Dorsolateral prefrontal cortex (tissue), 120 donors: ENCODE measurements at regions of chr19 and their contacts with region 1.

Region 1: DNA sequence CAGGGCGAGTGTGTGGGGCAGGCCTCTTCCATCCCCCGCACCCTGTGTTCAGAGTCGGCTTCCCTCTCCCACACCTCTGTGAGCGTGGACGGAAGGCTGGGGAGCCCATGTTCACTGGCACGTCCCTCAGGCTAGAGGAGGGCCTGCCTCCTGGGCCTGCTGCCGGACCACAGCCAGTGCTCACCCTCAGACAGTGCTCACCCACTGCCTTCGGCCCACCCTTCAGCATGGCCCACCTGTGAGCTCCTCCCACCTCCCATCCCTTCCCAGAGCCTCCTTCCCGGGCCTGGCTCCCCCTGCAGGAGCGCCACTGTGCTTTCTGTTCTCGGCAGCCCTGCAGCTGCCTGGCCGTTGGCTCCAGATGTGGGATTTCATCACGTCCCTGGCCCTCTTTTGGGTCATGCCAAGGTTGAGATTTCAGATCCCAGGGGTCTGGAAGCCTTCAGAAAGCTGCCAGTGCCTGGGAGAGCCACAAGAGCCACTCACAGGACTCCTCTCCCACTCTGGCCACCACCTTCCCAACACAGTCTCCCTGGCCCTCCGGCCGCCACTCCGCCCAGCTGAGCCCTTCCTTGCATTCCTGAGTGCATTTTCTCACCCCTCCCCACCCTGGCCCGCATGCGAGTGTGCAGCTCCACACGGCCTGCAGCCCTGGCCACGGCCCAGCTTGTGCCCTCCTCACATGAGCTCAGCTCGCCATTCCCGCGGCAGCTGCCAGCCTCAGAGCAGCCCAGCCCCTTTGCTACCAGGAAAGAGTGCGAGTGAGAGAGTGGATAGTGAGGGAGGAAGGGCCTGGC is 25.3 kb downstream of the CAPN12 start:
- DNase-seq: peak; percentile 46 to 85 (median 77)
- H3K4me3 ChIP-seq: peak overlapping the region in 1 of 59 donors; percentile 12
- H3K27ac ChIP-seq: peak overlapping the region; percentile 89 to 100 (median 97)
- H3K27me3 ChIP-seq: no peaks in the 10 kb centered on the region
- CTCF ChIP-seq: peak in 50 of 56 donors; percentile 8 to 59 (median 41)

Region 2: DNA sequence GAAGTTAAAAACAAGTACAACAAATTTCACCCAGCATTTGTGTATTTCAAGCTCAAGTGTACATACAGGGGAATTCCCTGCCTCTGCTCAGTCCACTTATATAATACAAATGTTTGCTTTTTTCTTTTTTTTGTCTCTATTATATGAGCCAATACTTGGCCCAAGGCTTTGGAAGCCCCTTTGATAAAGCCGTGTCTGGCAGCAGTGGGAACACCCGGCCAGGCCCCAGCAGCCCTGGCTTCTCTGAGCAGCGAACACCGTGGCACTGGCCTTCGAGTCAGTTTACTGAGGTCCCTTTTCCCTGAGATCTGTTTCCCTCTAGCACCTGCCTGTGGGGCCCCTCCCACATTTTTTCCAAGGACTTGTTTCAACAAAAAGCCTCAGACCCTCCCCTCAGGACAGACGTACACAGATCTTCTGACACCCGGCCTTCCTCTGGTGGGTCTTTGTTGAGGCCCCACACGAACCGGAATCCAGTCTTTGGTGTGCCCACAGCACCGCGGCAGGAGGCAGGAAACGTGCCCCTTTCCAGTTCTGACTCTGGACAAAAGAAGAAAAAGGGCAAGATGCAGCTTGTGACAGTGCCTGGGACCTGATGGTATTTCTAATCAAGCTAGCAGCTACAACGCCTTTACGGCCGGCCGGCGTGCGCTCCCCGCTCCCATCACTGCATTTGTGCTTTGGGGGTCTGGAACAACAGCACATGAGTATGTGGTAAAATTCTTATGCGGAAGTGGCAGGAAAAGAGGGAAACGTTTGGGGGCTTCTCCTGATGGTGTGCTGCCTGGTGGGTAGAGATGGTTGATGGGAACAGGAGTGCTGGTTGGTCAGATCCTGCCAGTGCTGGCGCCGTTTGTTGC is 798.1 kb before region 1 on chr19:
- intact Hi-C with region 1: no loop called
- DNase-seq: no peak
- H3K4me3 ChIP-seq: peak overlapping the region in 2 of 59 donors; percentile 2 to 34
- H3K27ac ChIP-seq: peak overlapping the region in 25 of 59 donors; percentile 1 to 72 (median 38)
- H3K27me3 ChIP-seq: no peaks in the 10 kb centered on the region
- CTCF ChIP-seq: no peak

Region 3: GRCh38 chr19:38663957-38664502 is 54.9 kb before region 1 on chr19:
- intact Hi-C with region 1: loop called (anchors 5 kb)
- DNase-seq: peak; percentile 50 to 83 (median 72)
- H3K4me3 ChIP-seq: peak overlapping the region in 41 of 59 donors; percentile 0 to 56 (median 22)
- H3K27ac ChIP-seq: peak overlapping the region; percentile 23 to 96 (median 86)
- H3K27me3 ChIP-seq: no peaks in the 10 kb centered on the region
- CTCF ChIP-seq: peak in 2 of 56 donors; percentile 10 to 15

Region 4: GRCh38 chr19:38769635-38770211 is 50.8 kb after region 1 on chr19:
- intact Hi-C with region 1: no loop called
- DNase-seq: peak; percentile 5 to 77 (median 43)
- H3K4me3 ChIP-seq: peak overlapping the region in 49 of 59 donors; percentile 5 to 57 (median 32)
- H3K27ac ChIP-seq: peak overlapping the region in 15 of 59 donors; percentile 6 to 67 (median 32)
- H3K27me3 ChIP-seq: no peaks in the 10 kb centered on the region
- CTCF ChIP-seq: peak in 55 of 56 donors; percentile 15 to 90 (median 63)